ENCODE measurements at regions of chr9 and their contacts with region 1.

Region 1: GRCh38 chr9:114108016-114108833 is 9.1 kb upstream of the KIF12 start:
- DNase-seq: peak; percentile 74
- H3K4me3 ChIP-seq: no peak overlapping the region
- H3K27ac ChIP-seq: no peak overlapping the region
- H3K4me1 ChIP-seq: peaks cover 10% of the 10 kb centered on the region
- H3K27me3 ChIP-seq: peaks cover 3 to 7% of the 10 kb centered on the region in 2 experiments
- CTCF ChIP-seq: peak; percentile 97 to 99
- POLR2A ChIP-seq: no peak

Region 2: DNA sequence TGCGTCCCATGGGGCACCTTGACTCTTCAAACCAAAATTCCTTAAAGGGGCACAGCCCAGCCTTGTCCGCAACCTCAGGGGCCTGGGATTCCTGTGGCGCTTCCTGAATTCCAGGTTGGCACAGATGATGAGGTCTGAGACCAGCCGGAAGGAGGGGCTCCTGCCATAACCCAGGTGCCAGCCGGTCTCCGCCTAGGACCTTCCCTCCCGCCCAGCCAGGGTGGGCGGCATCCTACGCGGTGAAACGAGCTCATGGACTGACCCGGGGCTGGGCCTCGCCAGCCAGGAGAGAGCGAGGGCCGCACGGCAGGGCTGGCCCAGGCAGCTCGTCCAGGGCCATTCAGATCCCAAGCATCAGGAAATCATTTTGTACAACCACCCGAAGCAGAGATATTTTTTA is 53.2 kb before region 1 on chr9:
- CTCF ChIA-PET with region 1: no interaction called
- POLR2A ChIA-PET with region 1: no interaction called
- dilution Hi-C with region 1: no loop called
- intact Hi-C with region 1: no loop called
- DNase-seq: no peak
- H3K4me3 ChIP-seq: no peak overlapping the region
- H3K27ac ChIP-seq: no peak overlapping the region
- H3K4me1 ChIP-seq: no peaks in the 10 kb centered on the region
- H3K27me3 ChIP-seq: no peaks in the 10 kb centered on the region
- CTCF ChIP-seq: no peak
- POLR2A ChIP-seq: no peak

Region 3: GRCh38 chr9:114124666-114125475 is 16.6 kb after region 1 on chr9:
- CTCF ChIA-PET with region 1: interaction called, 41 read pairs
- POLR2A ChIA-PET with region 1: no interaction called
- dilution Hi-C with region 1: no loop called
- intact Hi-C with region 1: no loop called
- DNase-seq: no peak
- H3K4me3 ChIP-seq: no peak overlapping the region
- H3K27ac ChIP-seq: no peak overlapping the region
- H3K4me1 ChIP-seq: no peaks in the 10 kb centered on the region
- H3K27me3 ChIP-seq: peaks cover 15 to 19% of the 10 kb centered on the region in 2 experiments
- CTCF ChIP-seq: no peak
- POLR2A ChIP-seq: no peak

Region 4: GRCh38 chr9:114155263-114155972 is 47.2 kb after region 1 on chr9 and contains the start of gene COL27A1:
- CTCF ChIA-PET with region 1: interaction called, 89 read pairs
- POLR2A ChIA-PET with region 1: no interaction called
- dilution Hi-C with region 1: no loop called
- intact Hi-C with region 1: loop called (anchors 1 kb)
- DNase-seq: peak; percentile 81
- H3K4me3 ChIP-seq: peak within 1 kb of the TSS; percentile 41 to 79 (median 68)
- H3K27ac ChIP-seq: peak within 1 kb of the TSS; percentile 36
- H3K4me1 ChIP-seq: peaks cover 25% of the 10 kb centered on the region
- H3K27me3 ChIP-seq: peaks cover 16 to 18% of the 10 kb centered on the region in 2 experiments
- CTCF ChIP-seq: peak; percentile 82 to 97
- POLR2A ChIP-seq: no peak
- total RNA-seq, gene COL27A1: 48.6 and 49.1 TPM in 2 replicates

Region 5: DNA sequence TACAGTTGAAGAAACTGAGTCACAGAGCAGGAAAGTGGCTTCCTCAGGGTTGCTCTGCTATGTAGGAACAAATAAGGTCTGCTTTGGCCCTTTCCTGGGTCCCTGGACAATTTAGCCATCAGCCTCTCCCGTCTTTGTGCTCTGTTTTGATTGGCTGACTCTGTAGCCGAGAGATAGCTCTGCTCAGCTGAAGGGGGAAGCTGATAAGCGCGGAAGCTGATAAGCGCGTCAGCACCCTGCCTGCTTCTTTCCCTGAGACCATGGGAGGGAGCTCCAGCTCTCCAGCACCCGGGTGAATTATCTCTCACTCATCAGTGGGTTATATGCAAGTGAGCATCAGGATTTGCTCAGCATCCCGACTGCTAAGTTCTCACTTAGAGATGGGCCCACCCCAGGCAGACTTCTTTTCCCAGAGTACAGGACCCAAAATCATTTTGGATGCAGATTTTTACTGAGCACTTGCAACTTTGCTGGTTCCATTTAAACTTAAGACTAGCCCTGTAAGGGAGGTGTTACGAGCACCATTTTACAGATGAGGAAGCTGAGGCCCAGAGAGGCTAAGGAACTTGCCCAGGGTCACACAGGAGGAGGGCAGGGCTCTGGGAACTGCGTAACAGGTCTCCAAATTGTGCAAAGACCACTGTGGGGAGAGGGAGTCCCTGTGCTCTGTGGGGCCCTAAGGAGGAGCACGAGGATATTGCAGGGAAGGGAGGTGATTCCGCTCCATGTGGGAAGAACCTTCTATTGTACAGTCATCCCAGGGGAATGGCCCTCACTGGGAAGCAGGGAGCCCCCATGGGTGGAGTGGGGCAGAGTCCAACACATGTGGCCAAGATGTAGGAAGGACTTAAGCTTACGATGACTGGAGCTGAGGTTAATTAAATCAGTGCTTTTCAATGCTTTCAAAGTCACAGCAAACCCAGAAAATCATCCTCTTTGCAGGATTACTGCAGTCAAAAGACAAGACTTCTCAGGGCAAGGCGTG is 131.0 kb after region 1 on chr9:
- CTCF ChIA-PET with region 1: interaction called, 24 read pairs
- POLR2A ChIA-PET with region 1: no interaction called
- dilution Hi-C with region 1: no loop called
- intact Hi-C with region 1: no loop called
- DNase-seq: peak; percentile 51
- H3K4me3 ChIP-seq: no peak overlapping the region
- H3K27ac ChIP-seq: no peak overlapping the region
- H3K4me1 ChIP-seq: peaks cover 8% of the 10 kb centered on the region
- H3K27me3 ChIP-seq: no peaks in the 10 kb centered on the region
- CTCF ChIP-seq: peak in 1 of 2 donors; percentile 50
- POLR2A ChIP-seq: no peak

Region 6: DNA sequence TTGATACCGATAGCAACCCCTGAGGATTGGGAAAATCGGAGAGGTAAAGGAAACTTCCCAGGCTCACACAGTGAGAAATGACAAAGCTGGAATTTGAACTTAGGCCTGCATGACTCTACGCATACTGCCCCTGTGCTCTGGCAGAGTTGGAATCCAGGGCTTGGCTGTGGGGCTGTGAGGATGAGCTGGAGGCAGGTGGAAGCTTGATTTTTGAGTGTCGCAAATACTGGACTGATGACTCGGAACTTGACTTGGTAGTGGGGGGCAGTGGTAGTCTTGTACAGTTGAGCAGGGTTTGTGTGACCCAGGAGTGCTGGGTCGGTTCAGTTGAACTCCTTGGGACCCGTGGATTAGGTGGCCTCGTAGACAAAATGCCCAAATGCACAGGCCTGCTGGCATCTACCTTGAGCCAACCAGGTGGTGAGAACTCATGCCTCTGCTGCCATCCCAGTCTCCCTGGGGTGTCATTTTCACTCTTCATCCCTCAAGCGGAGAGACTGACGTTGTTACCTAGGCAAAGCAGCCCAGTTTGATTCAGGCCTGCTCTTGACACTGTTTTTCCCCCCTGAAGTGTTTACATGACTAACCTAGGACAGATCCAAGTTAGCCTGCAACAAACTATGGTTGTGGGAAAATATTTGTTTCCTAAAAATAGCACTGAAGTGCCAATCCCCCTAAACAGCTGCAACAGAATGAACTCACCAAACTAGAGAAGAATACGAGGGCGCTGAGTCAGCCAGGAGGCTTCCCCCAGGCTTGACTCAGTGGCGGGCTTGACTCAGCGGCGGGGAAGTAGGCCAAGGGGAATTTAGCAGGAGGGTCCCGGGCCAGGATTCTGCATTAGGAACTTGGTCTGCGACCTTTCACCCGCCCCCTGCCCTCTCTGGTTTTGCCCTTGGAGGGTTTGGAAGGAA is 168.9 kb after region 1 on chr9:
- CTCF ChIA-PET with region 1: interaction called, 83 read pairs
- POLR2A ChIA-PET with region 1: no interaction called
- dilution Hi-C with region 1: no loop called
- intact Hi-C with region 1: no loop called
- DNase-seq: peak; percentile 38
- H3K4me3 ChIP-seq: no peak overlapping the region
- H3K27ac ChIP-seq: peak overlapping the region; percentile 42
- H3K4me1 ChIP-seq: peaks cover 2% of the 10 kb centered on the region
- H3K27me3 ChIP-seq: no peaks in the 10 kb centered on the region
- CTCF ChIP-seq: no peak
- POLR2A ChIP-seq: no peak

Region 7: GRCh38 chr9:114299286-114300152 is 191.3 kb after region 1 on chr9:
- CTCF ChIA-PET with region 1: interaction called, 24 read pairs
- POLR2A ChIA-PET with region 1: no interaction called
- dilution Hi-C with region 1: no loop called
- intact Hi-C with region 1: no loop called
- DNase-seq: no peak
- H3K4me3 ChIP-seq: no peak overlapping the region
- H3K27ac ChIP-seq: no peak overlapping the region
- H3K4me1 ChIP-seq: no peaks in the 10 kb centered on the region
- H3K27me3 ChIP-seq: no peaks in the 10 kb centered on the region
- CTCF ChIP-seq: no peak
- POLR2A ChIP-seq: no peak

Region 8: DNA sequence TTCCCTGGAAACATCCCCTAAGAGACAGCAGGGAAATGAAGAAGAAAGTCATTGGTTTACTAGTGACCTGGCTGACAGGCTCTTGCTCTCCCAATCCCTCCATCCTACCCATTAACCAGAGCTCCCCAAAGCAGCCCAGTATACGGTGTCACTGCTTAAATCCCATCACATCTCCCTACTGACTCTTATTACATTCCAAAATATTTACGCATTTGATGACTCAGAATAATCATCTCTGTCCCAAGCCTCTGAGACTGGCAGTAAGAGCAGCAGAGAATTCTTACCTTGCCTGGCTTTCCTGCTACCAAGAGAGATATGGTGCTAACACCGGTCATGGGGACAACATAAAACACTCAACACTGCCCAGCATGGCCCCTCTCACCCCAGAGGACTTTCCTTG is 417.3 kb after region 1 on chr9:
- CTCF ChIA-PET with region 1: no interaction called
- POLR2A ChIA-PET with region 1: no interaction called
- dilution Hi-C with region 1: no loop called
- intact Hi-C with region 1: no loop called
- DNase-seq: no peak
- H3K4me3 ChIP-seq: no peak overlapping the region
- H3K27ac ChIP-seq: no peak overlapping the region
- H3K4me1 ChIP-seq: no peaks in the 10 kb centered on the region
- H3K27me3 ChIP-seq: peaks cover 9 to 16% of the 10 kb centered on the region in 2 experiments
- CTCF ChIP-seq: no peak
- POLR2A ChIP-seq: no peak

Measured in endothelial cell of umbilical vein (primary cell).